ENCODE measurements at regions of chr7 and their contacts with region 1.

Region 1: GRCh38 chr7:25191640-25192039 is 36.6 kb downstream of the NPVF start:
- DNase-seq: no peak
- ATAC-seq: no peak
- H3K4me3 ChIP-seq: no peak overlapping the region
- H3K27ac ChIP-seq: no peak overlapping the region
- H3K4me1 ChIP-seq: no peaks in the 10 kb centered on the region
- H3K27me3 ChIP-seq: no peaks in the 10 kb centered on the region; the same call in 1 of the 2 replicates
- CTCF ChIP-seq: no peak
- POLR2A ChIP-seq: no peak
- RAD21 ChIP-seq: no peak

Region 2: DNA sequence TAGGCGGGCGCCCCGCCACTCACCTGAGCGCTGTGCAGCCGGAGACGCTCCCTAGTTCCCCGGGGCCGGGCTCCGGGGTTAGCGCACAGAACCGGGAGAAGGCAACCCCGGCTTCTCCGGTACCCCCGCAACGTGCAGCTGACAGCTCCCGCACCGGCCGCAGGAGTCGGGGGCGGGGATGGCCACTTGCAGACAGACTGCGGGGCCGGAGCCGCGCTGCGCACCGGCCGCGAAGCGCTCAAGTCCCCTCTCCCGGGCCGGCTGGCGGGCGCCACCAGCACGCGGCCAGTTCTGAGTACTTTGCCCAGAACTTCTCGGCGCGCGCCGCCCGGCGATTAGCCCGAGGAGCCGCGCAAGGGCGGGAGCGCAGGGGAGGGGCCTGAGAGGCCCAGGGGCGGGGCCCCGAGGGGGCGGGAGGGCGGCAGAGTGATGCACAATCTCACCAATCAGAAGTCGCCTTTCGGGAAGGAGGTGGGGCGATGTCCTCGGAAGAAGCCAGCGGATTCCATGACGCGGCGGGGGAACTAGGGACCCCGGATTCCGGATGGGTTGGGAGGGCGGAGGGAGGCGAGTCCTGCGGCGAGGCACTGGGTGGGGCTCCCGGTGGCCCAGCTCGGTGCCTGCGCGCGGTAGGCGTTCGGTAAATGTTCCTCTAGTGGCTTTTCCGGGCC is 211.6 kb before region 1 on chr7 and contains the start of gene OSBPL3:
- CTCF ChIA-PET with region 1: no interaction called
- POLR2A ChIA-PET with region 1: no interaction called
- RAD21 ChIA-PET with region 1: no interaction called
- intact Hi-C with region 1: no loop called
- DNase-seq: peak; percentile 92
- ATAC-seq: peak; percentile 80
- H3K4me3 ChIP-seq: peak within 1 kb of the TSS; percentile 55 to 66
- H3K27ac ChIP-seq: peak within 1 kb of the TSS; percentile 89
- H3K4me1 ChIP-seq: peaks cover 14 to 51% of the 10 kb centered on the region in 2 experiments
- H3K27me3 ChIP-seq: no peaks in the 10 kb centered on the region
- CTCF ChIP-seq: no peak
- POLR2A ChIP-seq: peak; percentile 24
- RAD21 ChIP-seq: peak; percentile 35
- total RNA-seq, gene OSBPL3: 36.8 TPM

Region 3: GRCh38 chr7:25179771-25180591 is 11.7 kb before region 1 on chr7:
- CTCF ChIA-PET with region 1: interaction called, 11 read pairs
- POLR2A ChIA-PET with region 1: no interaction called
- RAD21 ChIA-PET with region 1: no interaction called
- intact Hi-C with region 1: no loop called
- DNase-seq: peak; percentile 32
- ATAC-seq: peak; percentile 98
- H3K4me3 ChIP-seq: peak overlapping the region; percentile 49 to 52
- H3K27ac ChIP-seq: no peak overlapping the region
- H3K4me1 ChIP-seq: peaks cover 0 to 8% of the 10 kb centered on the region in 2 experiments; a peak in 1 of 4 replicates
- H3K27me3 ChIP-seq: no peaks in the 10 kb centered on the region
- CTCF ChIP-seq: peak; percentile 36 to 79 (median 59); a peak in 5 of 6 replicates
- POLR2A ChIP-seq: no peak
- RAD21 ChIP-seq: no peak